ENCODE measurements at regions of chr11 and their contacts with region 1.

Region 1: DNA sequence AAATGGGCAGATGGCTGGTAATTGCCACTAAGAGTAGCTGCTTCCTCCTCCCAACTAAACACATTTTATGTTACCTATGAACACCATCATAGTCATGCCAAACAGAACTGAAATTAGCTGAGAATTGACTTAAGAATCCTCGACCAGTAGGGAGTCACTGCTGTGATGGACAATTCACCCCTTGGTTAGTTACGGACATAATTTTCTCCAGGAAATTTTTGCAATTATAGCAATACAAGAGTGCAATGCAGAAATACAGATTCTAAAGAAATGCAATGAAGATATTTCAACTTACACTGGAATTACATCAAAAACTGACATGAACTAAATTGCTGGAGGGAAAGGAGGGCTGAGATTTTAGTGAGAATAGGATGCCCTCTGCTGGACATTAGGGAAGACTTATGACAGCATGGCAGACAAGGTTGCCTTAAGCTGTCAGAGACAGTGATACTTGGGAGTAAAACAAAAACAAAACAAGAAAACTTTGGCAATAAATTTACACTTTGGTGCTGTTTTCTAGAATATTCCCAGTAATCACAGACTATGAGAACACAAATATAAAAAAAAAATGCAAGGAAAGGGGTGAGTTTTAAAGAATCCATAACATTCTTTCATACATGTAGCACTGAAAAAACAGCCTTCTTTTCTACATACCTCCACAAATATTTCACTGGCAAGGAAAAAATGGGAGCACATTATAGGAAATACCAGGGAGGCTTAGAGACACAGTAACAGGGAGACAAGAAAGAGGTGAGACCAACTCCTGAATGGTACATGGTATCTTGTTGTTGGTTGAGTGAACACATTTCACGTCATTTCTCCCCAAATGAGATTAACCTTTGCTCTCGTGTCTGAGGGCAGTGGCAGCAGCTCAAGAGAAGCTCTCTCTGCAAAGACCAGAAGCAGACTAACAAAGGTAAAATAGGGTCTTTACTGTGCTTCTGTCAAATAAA is 11.2 kb upstream of the PPP2R1B start:
- DNase-seq: peak in 2 of 10 donors; percentile 43 to 54
- H3K4me3 ChIP-seq: no peak overlapping the region
- H3K27ac ChIP-seq: peak overlapping the region in 50 of 59 donors; percentile 5 to 82 (median 62)
- H3K27me3 ChIP-seq: no peaks in the 10 kb centered on the region
- CTCF ChIP-seq: peak; percentile 61 to 97 (median 88)

Region 2: DNA sequence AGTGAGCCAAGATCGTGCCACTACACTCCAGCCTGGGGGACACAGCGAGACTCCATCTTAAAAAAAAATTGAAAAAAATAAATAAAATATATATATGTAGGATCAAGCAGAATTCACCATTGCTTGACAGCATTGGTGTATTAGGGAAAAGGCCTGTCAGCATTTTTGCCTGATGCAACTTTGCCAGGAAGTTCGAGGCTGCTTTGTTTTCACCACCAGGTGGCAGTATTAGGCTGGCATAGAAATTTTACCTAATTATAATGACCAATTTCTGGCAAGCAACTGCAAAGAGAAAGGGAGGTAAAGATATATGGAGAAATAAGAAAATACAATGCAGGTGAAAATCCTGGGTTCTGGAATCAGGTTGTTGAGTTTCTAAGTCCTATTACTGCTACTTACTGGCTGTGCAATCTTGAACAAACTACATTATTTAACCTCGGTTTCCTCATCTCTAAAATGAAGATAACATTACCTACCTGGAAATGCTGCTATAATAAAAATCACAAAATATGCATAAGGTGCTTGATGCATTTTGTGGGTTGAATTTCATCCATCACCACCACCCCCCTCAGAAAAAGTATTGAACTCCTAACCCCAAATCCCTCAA is 212.2 kb before region 1 on chr11:
- intact Hi-C with region 1: loop called in 1 of 2 experiments (anchors 1 kb)
- DNase-seq: peak in 8 of 10 donors; percentile 49 to 85 (median 60)
- H3K4me3 ChIP-seq: no peak overlapping the region
- H3K27ac ChIP-seq: peak overlapping the region in 1 of 59 donors; percentile 30
- H3K27me3 ChIP-seq: no peaks in the 10 kb centered on the region
- CTCF ChIP-seq: peak; percentile 87 to 98 (median 95)

Region 3: GRCh38 chr11:111601979-111602864 is 175.1 kb before region 1 on chr11 and contains the start of gene SIK2:
- intact Hi-C with region 1: loop called in 1 of 2 experiments (anchors 1 kb)
- DNase-seq: peak; percentile 89 to 97 (median 94)
- H3K4me3 ChIP-seq: peak within 1 kb of the TSS; percentile 61 to 100 (median 95)
- H3K27ac ChIP-seq: peak within 1 kb of the TSS; percentile 86 to 100 (median 98)
- H3K27me3 ChIP-seq: no peaks in the 10 kb centered on the region
- CTCF ChIP-seq: peak; percentile 53 to 99 (median 91)
- total RNA-seq, gene SIK2: 33.1 to 72.4 (median 50.6) TPM

Region 4: DNA sequence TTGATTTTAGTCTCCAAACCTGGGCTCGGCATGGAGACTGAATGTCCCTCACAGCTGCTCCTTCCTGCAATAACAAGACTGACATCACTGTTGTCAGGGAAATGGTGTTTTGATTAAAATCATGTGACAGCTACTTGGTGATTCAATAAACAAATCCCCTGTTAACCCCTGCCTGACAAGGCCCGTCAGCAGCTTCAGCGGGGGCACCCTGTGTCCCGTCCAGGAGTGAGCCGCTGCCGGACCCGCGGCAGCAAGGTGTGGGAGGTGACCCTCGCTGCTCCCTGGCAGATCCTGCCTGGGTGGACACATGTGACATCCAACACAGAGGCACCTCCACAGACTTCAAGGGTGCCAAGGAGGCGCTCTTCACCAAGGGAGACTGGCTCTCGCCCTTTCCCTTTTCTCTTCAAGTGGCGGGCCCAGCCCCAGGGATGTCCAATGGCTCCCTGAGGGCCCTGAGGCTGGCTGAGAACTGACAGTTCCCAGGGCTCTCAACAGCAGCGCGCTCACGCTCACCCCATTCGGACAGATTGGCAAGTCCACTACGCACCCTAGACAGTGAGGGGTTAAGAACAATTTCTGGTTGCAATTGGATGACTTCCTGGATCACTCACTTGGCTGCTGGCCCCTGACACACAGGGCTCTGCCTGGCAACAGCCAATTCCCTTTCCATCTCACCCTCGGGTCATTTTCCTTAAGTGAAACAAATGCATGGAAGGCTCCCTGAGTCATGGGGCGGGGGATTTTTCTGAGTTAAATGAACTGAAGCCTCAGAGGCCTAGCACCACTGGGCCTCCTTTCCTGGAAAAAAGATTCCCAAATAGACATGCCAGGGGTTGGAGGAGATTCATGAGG is 41.9 kb before region 1 on chr11:
- intact Hi-C with region 1: loop called in 1 of 2 experiments (anchors 5 kb)
- DNase-seq: peak; percentile 60 to 88 (median 79)
- H3K4me3 ChIP-seq: peak overlapping the region; percentile 8 to 73 (median 52)
- H3K27ac ChIP-seq: peak overlapping the region; percentile 96 to 100 (median 100)
- H3K27me3 ChIP-seq: no peaks in the 10 kb centered on the region
- CTCF ChIP-seq: peak in 40 of 56 donors; percentile 3 to 68 (median 34)

Region 5: DNA sequence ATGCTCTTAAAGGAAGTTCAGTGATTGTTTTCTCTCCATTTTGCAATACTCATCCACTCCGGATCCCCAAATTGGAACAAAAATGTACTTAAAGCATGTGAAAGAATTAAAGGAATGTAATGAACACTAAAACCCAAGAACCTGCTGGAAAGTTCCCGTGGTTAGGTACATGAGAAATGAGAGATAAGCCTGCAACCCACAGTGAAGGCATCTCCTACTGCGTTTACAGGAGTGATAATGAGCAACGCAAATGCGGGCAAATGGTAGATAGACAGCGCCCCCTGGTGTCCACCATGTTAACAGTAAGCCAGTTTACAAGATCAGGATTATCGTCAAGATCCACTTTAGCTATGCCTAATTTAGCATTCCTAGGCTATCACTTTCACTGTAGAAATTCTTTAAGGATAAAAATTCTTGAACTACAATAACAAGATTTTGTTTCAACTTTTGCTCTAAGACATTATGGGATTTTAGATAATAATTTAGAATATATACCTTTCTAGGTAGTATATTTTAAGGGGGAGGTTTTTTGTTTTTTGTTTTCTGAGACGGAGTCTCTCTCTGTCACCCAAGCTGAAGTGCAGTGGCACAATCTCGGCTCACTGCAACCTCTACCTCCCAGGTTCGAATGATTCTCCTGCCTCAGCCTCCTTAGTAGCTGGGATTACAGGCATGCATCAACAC is 64.1 kb after region 1 on chr11:
- intact Hi-C with region 1: loop called (anchors 5 to 10 kb)
- DNase-seq: peak; percentile 85 to 98 (median 92)
- H3K4me3 ChIP-seq: peak overlapping the region in 10 of 59 donors; percentile 0 to 25 (median 15)
- H3K27ac ChIP-seq: peak overlapping the region in 48 of 59 donors; percentile 0 to 75 (median 44)
- H3K27me3 ChIP-seq: no peaks in the 10 kb centered on the region
- CTCF ChIP-seq: peak; percentile 86 to 99 (median 96)